ENCODE measurements at regions of chr3 and their contacts with region 1.

Region 1: DNA sequence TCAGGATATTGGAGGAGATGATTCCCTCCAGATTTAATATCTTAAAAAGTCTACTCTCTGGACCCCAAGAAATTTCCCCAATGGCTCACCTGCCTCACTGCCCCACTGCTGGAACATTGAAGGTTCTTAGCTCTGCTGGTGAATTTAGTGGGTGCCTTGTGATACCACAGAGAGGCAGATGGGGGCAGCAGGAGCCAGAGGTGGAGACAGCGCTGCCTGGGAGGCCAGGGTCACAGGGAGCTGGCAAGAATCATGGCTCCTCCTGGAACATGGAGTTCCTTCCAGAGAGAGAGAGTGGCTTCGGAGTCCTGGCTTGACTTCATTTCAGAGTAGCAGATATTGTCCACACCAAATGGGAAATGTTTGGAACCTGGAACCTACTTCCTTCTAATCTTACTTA is 263.5 kb upstream of the CFAP20DC start:
- DNase-seq: peak in 7 of 9 experiments; percentile 5 to 52 (median 25)
- ATAC-seq: no peak
- H3K4me3 ChIP-seq: no peak overlapping the region
- H3K4me3 Mint-ChIP-seq: no peak overlapping the region
- H3K27ac ChIP-seq: no peak overlapping the region
- H3K27ac Mint-ChIP-seq: no peak overlapping the region
- H3K4me1 ChIP-seq: no peaks in the 10 kb centered on the region
- H3K4me1 Mint-ChIP-seq: peaks cover 3% of the 10 kb centered on the region
- H3K27me3 ChIP-seq: no peaks in the 10 kb centered on the region
- H3K27me3 Mint-ChIP-seq: no peaks in the 10 kb centered on the region
- CTCF ChIP-seq: peak; percentile 38

Region 2: DNA sequence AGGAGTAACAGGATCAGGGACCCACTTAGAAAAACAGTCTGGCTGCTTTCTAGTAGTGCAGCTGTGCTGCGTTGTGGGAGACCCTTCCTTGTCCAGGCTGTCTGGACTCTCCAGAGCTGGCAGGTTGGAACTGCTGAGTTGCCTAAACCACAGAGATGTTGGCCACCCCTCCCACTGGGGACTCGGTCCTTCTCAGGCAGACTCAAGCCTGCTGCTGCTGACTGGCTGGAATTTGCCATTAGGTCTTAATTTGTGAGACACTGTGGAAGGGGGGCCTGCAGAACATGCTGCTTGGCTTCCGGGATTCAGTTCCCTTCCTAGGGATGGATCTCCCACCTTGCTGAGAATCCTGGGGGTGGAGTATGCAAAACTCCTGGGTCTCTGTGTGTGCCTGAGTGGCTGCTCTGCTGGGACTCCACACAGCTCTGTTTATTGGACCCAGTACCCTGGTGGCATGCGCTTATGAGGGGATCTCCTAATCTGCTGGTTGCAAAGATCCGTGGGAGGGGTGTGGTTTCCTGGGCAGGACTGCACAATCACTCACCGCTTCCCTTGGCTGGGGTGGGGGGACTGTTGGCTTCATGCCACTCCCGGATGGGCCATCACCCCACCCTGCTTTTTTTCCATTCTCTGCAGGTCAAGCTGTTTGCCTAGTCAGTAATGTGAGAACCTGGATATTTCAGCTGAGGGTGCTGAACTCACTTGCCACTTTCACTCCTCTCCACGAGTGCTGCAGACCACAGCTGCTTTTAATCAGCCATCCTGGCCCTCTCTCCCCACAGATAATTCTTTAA is 414.0 kb before region 1 on chr3:
- CTCF ChIA-PET with region 1: no interaction called
- POLR2A ChIA-PET with region 1: no interaction called
- intact Hi-C with region 1: no loop called
- DNase-seq: peak in 5 of 9 experiments; percentile 5 to 32 (median 7)
- ATAC-seq: no peak
- H3K4me3 ChIP-seq: no peak overlapping the region
- H3K4me3 Mint-ChIP-seq: no peak overlapping the region
- H3K27ac ChIP-seq: no peak overlapping the region
- H3K27ac Mint-ChIP-seq: no peak overlapping the region
- H3K4me1 ChIP-seq: peaks cover 5% of the 10 kb centered on the region
- H3K4me1 Mint-ChIP-seq: peaks cover 5% of the 10 kb centered on the region
- H3K27me3 ChIP-seq: no peaks in the 10 kb centered on the region
- H3K27me3 Mint-ChIP-seq: no peaks in the 10 kb centered on the region
- CTCF ChIP-seq: no peak

Region 3: GRCh38 chr3:59809710-59810444 is 496.5 kb after region 1 on chr3:
- CTCF ChIA-PET with region 1: no interaction called
- POLR2A ChIA-PET with region 1: no interaction called
- intact Hi-C with region 1: loop called in 1 of 2 experiments (anchors 10 kb)
- DNase-seq: peak in 2 of 9 experiments; percentile 23 to 40
- ATAC-seq: peak; percentile 36
- H3K4me3 ChIP-seq: no peak overlapping the region
- H3K4me3 Mint-ChIP-seq: no peak overlapping the region
- H3K27ac ChIP-seq: no peak overlapping the region
- H3K27ac Mint-ChIP-seq: no peak overlapping the region
- H3K4me1 ChIP-seq: no peaks in the 10 kb centered on the region
- H3K4me1 Mint-ChIP-seq: peaks cover 11% of the 10 kb centered on the region
- H3K27me3 ChIP-seq: no peaks in the 10 kb centered on the region
- H3K27me3 Mint-ChIP-seq: no peaks in the 10 kb centered on the region
- CTCF ChIP-seq: no peak

Measured in CD8-positive, alpha-beta T cell (primary cell).